B cell (primary cell): ENCODE measurements at regions of chr13 and their contacts with region 1.

Region 1: GRCh38 chr13:42969558-42970172 is 22.4 kb downstream of the EPSTI1 start:
- DNase-seq: peak; percentile 80
- ATAC-seq: peak; percentile 80
- H3K4me3 ChIP-seq: no peak overlapping the region
- H3K4me3 Mint-ChIP-seq: no peak overlapping the region
- H3K27ac ChIP-seq: no peak overlapping the region
- H3K27ac Mint-ChIP-seq: peak overlapping the region; percentile 12
- H3K4me1 ChIP-seq: peaks cover 22 to 29% of the 10 kb centered on the region in 2 donors
- H3K4me1 Mint-ChIP-seq: peaks cover 31% of the 10 kb centered on the region
- H3K27me3 ChIP-seq: no peaks in the 10 kb centered on the region
- H3K27me3 Mint-ChIP-seq: no peaks in the 10 kb centered on the region
- CTCF ChIP-seq: peak; percentile 88

Region 2: GRCh38 chr13:42279080-42279479 is 690.6 kb before region 1 on chr13:
- CTCF ChIA-PET with region 1: no interaction called
- POLR2A ChIA-PET with region 1: no interaction called
- intact Hi-C with region 1: loop called (anchors 2 kb)
- DNase-seq: peak; percentile 72
- ATAC-seq: no peak
- H3K4me3 ChIP-seq: peak overlapping the region in 1 of 5 experiments; percentile 14
- H3K4me3 Mint-ChIP-seq: no peak overlapping the region
- H3K27ac ChIP-seq: peak overlapping the region in 1 of 2 donors; percentile 49
- H3K27ac Mint-ChIP-seq: no peak overlapping the region
- H3K4me1 ChIP-seq: peaks cover 62 to 64% of the 10 kb centered on the region in 2 donors
- H3K4me1 Mint-ChIP-seq: peaks cover 54% of the 10 kb centered on the region
- H3K27me3 ChIP-seq: no peaks in the 10 kb centered on the region
- H3K27me3 Mint-ChIP-seq: no peaks in the 10 kb centered on the region
- CTCF ChIP-seq: no peak

Region 3: DNA sequence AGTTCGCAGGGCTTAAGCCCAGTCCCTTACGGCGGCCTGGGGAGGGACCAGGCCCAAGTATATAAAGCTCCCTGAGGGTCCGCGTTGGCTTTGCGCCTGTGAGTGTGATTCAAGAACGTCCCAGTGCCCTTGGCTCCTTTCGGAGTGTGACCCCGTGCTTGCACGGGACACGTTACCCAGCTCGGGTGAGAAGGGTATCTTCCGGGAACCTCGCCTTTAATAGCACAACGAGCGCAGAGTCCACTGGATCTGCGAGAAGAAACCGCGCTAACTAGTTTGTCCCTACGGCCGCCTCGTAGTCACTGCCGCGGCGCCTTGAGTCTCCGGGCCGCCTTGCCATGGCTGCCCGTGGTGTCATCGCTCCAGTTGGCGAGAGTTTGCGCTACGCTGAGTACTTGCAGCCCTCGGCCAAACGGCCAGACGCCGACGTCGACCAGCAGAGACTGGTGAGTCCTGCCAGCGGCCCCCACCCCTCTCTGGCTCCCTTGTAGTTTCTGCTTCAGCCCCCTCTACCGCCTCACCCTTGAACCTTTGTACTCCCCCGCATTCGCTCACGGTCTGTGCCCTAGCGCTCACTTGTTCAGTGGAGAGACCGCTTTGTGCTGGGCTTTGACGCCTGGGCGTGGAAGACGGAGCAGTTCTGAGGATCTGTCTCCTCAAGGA is 53.8 kb after region 1 on chr13 and contains the start of gene DNAJC15:
- CTCF ChIA-PET with region 1: interaction called, 24 read pairs
- POLR2A ChIA-PET with region 1: interaction called, 3 read pairs
- intact Hi-C with region 1: loop called (anchors 2 kb)
- DNase-seq: peak; percentile 92
- ATAC-seq: peak; percentile 90
- H3K4me3 ChIP-seq: peak within 1 kb of the TSS; percentile 67 to 89 (median 70)
- H3K4me3 Mint-ChIP-seq: peak within 1 kb of the TSS; percentile 96
- H3K27ac ChIP-seq: peak within 1 kb of the TSS; percentile 81 to 87
- H3K27ac Mint-ChIP-seq: peak within 1 kb of the TSS; percentile 97
- H3K4me1 ChIP-seq: peaks cover 25 to 26% of the 10 kb centered on the region in 2 donors
- H3K4me1 Mint-ChIP-seq: peaks cover 41% of the 10 kb centered on the region
- H3K27me3 ChIP-seq: no peaks in the 10 kb centered on the region
- H3K27me3 Mint-ChIP-seq: no peaks in the 10 kb centered on the region
- CTCF ChIP-seq: peak; percentile 25
- total RNA-seq, gene DNAJC15: 13.5 and 15.2 TPM in 2 replicates

Region 4: GRCh38 chr13:43132257-43132656 is 162.6 kb after region 1 on chr13:
- CTCF ChIA-PET with region 1: interaction called, 15 read pairs
- POLR2A ChIA-PET with region 1: no interaction called
- intact Hi-C with region 1: loop called (anchors 2 kb)
- DNase-seq: peak; percentile 23
- ATAC-seq: no peak
- H3K4me3 ChIP-seq: no peak overlapping the region
- H3K4me3 Mint-ChIP-seq: no peak overlapping the region
- H3K27ac ChIP-seq: no peak overlapping the region
- H3K27ac Mint-ChIP-seq: no peak overlapping the region
- H3K4me1 ChIP-seq: peaks cover 15 to 16% of the 10 kb centered on the region in 2 donors
- H3K4me1 Mint-ChIP-seq: peaks cover 16% of the 10 kb centered on the region
- H3K27me3 ChIP-seq: peaks cover 0 to 19% (median 15%) of the 10 kb centered on the region in 4 experiments
- H3K27me3 Mint-ChIP-seq: peaks cover 32% of the 10 kb centered on the region
- CTCF ChIP-seq: no peak

Region 5: DNA sequence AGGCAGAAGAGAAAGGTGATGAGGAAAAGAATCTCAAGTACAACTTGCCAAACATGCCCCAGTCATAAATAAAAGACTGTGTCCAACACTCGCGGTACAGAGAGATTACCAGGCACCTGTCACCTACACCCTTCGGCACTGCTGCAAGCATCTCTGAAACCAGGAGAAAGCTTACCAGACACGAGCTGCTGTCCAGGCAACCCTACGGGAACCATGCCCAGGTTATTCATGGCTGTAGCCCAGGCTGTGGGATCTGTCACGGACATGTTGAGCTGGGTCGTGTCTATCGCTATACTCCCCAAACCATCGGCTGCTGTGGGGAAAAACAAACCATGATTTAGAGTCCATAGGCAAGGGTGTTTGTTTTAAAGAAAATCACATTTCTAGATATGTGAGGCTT is 442.1 kb after region 1 on chr13:
- CTCF ChIA-PET with region 1: no interaction called
- POLR2A ChIA-PET with region 1: no interaction called
- intact Hi-C with region 1: no loop called
- DNase-seq: no peak
- ATAC-seq: no peak
- H3K4me3 ChIP-seq: no peak overlapping the region
- H3K4me3 Mint-ChIP-seq: no peak overlapping the region
- H3K27ac ChIP-seq: no peak overlapping the region
- H3K27ac Mint-ChIP-seq: no peak overlapping the region
- H3K4me1 ChIP-seq: no peaks in the 10 kb centered on the region
- H3K4me1 Mint-ChIP-seq: no peaks in the 10 kb centered on the region
- H3K27me3 ChIP-seq: peaks cover 0 to 4% (median 0%) of the 10 kb centered on the region in 4 experiments
- H3K27me3 Mint-ChIP-seq: peaks cover 11% of the 10 kb centered on the region
- CTCF ChIP-seq: no peak

Region 6: DNA sequence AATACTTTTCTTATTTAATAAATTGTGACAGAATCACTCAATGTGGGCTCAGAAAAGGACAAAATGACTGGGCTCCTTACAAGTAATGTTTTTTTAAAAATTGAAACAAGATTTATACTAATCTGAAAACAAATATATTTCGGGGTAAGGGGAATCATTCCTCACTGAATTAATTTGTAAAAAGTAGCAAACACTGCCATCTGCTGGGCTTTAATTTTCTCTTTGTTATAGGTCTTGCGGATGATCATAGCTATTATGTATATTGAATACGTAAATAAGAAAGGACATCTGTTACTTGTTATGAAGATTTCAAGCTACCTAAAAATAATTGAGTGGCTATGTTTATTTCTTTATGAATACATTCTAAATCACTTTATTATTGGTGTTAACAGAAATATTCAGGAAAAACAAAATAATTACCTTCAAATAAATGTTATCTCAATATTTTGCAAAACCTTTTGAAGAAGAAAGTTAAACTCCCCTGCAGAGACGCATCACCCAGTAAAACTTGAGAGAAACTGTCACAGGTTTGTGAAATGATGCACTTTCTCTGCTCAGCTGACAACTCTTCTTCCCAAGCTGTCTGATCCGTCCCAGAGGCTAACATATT is 834.9 kb after region 1 on chr13:
- CTCF ChIA-PET with region 1: interaction called, 18 read pairs
- POLR2A ChIA-PET with region 1: no interaction called
- intact Hi-C with region 1: loop called (anchors 2 kb)
- DNase-seq: peak; percentile 59
- ATAC-seq: no peak
- H3K4me3 ChIP-seq: no peak overlapping the region
- H3K4me3 Mint-ChIP-seq: no peak overlapping the region
- H3K27ac ChIP-seq: no peak overlapping the region
- H3K27ac Mint-ChIP-seq: no peak overlapping the region
- H3K4me1 ChIP-seq: no peaks in the 10 kb centered on the region
- H3K4me1 Mint-ChIP-seq: no peaks in the 10 kb centered on the region
- H3K27me3 ChIP-seq: no peaks in the 10 kb centered on the region
- H3K27me3 Mint-ChIP-seq: peaks cover 13% of the 10 kb centered on the region
- CTCF ChIP-seq: peak; percentile 85

Region 7: DNA sequence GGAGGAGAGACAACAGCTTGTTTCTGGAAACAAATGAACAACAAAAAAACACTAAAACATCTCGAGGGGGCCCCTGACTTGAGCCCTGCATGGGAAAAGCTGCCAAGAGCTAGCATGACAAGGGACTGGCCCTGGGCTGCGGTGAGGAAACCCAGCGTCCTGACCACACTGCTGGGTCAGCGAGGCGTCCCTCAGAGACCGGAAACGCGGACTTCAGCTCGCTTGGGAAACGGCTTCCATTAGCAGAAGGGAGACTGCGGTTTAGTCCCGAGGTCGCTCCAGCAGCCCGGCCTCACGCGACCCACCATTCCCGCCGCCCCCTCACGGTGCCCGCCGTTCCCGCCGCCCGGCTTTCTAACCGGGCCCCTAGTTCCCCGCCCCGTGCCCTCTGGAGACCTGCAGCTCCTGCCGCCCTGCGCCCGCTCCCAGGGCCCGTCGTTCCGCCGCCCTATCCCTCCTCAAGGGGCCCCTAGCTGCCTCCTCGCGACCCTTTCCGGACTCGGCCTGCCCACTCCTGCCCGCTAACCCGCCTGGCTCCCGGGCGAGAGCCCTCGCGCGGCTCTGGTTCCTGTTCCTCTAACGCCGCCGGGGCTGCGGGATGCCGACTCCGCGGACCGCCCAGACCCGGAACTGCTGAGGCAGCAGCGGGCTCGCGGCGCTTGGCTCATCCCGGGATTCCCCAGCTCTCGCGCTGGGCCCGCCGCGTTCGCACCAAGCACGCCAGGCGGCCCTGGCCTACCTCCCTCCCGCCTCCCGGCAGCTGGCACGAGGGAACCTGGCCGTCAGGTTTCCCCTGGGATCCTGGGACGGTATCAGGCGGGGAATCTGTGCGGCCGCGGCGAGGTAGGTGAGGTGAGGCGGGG is 909.5 kb after region 1 on chr13 and contains the start of gene CCDC122:
- CTCF ChIA-PET with region 1: interaction called, 14 read pairs
- POLR2A ChIA-PET with region 1: no interaction called
- intact Hi-C with region 1: loop called (anchors 2 kb)
- DNase-seq: peak; percentile 89
- ATAC-seq: peak; percentile 79
- H3K4me3 ChIP-seq: peak within 1 kb of the TSS; percentile 36 to 78 (median 75)
- H3K4me3 Mint-ChIP-seq: peak within 1 kb of the TSS; percentile 88
- H3K27ac ChIP-seq: peak within 1 kb of the TSS; percentile 76 to 92
- H3K27ac Mint-ChIP-seq: peak within 1 kb of the TSS; percentile 94
- H3K4me1 ChIP-seq: peaks cover 20 to 22% of the 10 kb centered on the region in 2 donors
- H3K4me1 Mint-ChIP-seq: peaks cover 31% of the 10 kb centered on the region
- H3K27me3 ChIP-seq: no peaks in the 10 kb centered on the region
- H3K27me3 Mint-ChIP-seq: no peaks in the 10 kb centered on the region
- CTCF ChIP-seq: no peak
- total RNA-seq, gene CCDC122: 10.7 and 12.1 TPM in 2 replicates